ENCODE measurements at regions of chr7 and their contacts with region 1.

Region 1: GRCh38 chr7:90424720-90425119 is 21.5 kb downstream of the CLDN12 start:
- DNase-seq: no peak
- H3K4me3 ChIP-seq: no peak overlapping the region
- CTCF ChIP-seq: no peak

Region 2: GRCh38 chr7:90262438-90262837 is 162.3 kb before region 1 on chr7:
- in situ Hi-C with region 1: loop called (anchors 25 kb)
- DNase-seq: no peak
- H3K4me3 ChIP-seq: no peak overlapping the region
- CTCF ChIP-seq: peak; percentile 28